Endothelial cell of umbilical vein (primary cell): ENCODE measurements at regions of chr18 and their contacts with region 1.

Region 1: DNA sequence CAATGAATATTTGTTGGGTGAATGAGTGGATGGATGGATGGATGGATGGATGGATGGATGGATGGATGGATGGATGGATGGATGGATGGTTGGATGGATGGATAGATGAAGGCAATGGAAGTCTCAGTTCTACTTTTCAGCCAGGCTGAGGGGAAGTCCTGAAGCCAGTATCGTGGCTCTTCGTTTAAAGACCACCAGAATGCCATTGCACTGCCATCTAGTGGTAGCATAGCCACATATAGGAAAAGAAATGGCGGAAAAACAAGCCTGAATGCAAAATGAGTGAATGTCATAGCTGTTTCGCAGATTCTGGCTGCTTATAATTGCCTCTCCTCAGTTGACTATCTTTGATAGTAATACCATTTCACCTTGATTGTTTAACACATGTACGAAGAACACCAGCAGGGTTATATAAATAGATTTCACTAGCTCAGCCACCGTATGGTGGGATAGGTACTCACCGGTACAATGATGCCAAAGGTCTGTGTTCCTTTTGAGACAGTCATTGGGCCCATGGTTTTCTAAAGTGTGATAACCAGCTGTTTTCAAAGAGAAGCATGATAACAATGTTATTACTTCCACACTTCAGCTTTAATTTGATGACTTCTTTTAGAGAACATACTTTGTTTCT is 62.3 kb upstream of the GREB1L start:
- DNase-seq: peak; percentile 50
- H3K4me3 ChIP-seq: no peak overlapping the region
- H3K27ac ChIP-seq: no peak overlapping the region
- H3K4me1 ChIP-seq: no peaks in the 10 kb centered on the region
- H3K27me3 ChIP-seq: no peaks in the 10 kb centered on the region
- CTCF ChIP-seq: peak; percentile 67 to 75
- POLR2A ChIP-seq: no peak

Region 2: GRCh38 chr18:20971886-20972267 is 207.8 kb before region 1 on chr18:
- CTCF ChIA-PET with region 1: interaction called, 6 read pairs
- POLR2A ChIA-PET with region 1: interaction called, 3 read pairs
- dilution Hi-C with region 1: no loop called
- intact Hi-C with region 1: loop called (anchors 5 kb)
- DNase-seq: peak; percentile 42
- H3K4me3 ChIP-seq: no peak overlapping the region
- H3K27ac ChIP-seq: no peak overlapping the region
- H3K4me1 ChIP-seq: no peaks in the 10 kb centered on the region
- H3K27me3 ChIP-seq: no peaks in the 10 kb centered on the region
- CTCF ChIP-seq: peak; percentile 25 to 53
- POLR2A ChIP-seq: no peak

Region 3: GRCh38 chr18:21450913-21451312 is 271.2 kb after region 1 on chr18:
- CTCF ChIA-PET with region 1: no interaction called
- POLR2A ChIA-PET with region 1: interaction called, 10 read pairs
- dilution Hi-C with region 1: no loop called
- intact Hi-C with region 1: no loop called
- DNase-seq: peak; percentile 65
- H3K4me3 ChIP-seq: no peak overlapping the region
- H3K27ac ChIP-seq: no peak overlapping the region
- H3K4me1 ChIP-seq: peaks cover 16% of the 10 kb centered on the region
- H3K27me3 ChIP-seq: peaks cover 0 to 2% of the 10 kb centered on the region in 2 experiments
- CTCF ChIP-seq: no peak
- POLR2A ChIP-seq: no peak

Region 4: GRCh38 chr18:21548637-21549036 is 368.9 kb after region 1 on chr18:
- CTCF ChIA-PET with region 1: no interaction called
- POLR2A ChIA-PET with region 1: no interaction called
- dilution Hi-C with region 1: no loop called
- intact Hi-C with region 1: no loop called
- DNase-seq: no peak
- H3K4me3 ChIP-seq: no peak overlapping the region
- H3K27ac ChIP-seq: no peak overlapping the region
- H3K4me1 ChIP-seq: no peaks in the 10 kb centered on the region
- H3K27me3 ChIP-seq: no peaks in the 10 kb centered on the region
- CTCF ChIP-seq: no peak
- POLR2A ChIP-seq: no peak

Region 5: GRCh38 chr18:22108674-22109073 is 929.0 kb after region 1 on chr18:
- CTCF ChIA-PET with region 1: no interaction called
- POLR2A ChIA-PET with region 1: no interaction called
- dilution Hi-C with region 1: no loop called
- intact Hi-C with region 1: no loop called
- DNase-seq: peak; percentile 22
- H3K4me3 ChIP-seq: no peak overlapping the region
- H3K27ac ChIP-seq: no peak overlapping the region
- H3K4me1 ChIP-seq: peaks cover 5% of the 10 kb centered on the region
- H3K27me3 ChIP-seq: peaks cover 0 to 2% of the 10 kb centered on the region in 2 experiments
- CTCF ChIP-seq: peak in 1 of 2 donors; percentile 8
- POLR2A ChIP-seq: no peak